ENCODE measurements at regions of chr4 and their contacts with region 1.

Region 1: GRCh38 chr4:63607169-63607872 is 801.9 kb downstream of the TECRL start:
- DNase-seq: no peak

Region 2: DNA sequence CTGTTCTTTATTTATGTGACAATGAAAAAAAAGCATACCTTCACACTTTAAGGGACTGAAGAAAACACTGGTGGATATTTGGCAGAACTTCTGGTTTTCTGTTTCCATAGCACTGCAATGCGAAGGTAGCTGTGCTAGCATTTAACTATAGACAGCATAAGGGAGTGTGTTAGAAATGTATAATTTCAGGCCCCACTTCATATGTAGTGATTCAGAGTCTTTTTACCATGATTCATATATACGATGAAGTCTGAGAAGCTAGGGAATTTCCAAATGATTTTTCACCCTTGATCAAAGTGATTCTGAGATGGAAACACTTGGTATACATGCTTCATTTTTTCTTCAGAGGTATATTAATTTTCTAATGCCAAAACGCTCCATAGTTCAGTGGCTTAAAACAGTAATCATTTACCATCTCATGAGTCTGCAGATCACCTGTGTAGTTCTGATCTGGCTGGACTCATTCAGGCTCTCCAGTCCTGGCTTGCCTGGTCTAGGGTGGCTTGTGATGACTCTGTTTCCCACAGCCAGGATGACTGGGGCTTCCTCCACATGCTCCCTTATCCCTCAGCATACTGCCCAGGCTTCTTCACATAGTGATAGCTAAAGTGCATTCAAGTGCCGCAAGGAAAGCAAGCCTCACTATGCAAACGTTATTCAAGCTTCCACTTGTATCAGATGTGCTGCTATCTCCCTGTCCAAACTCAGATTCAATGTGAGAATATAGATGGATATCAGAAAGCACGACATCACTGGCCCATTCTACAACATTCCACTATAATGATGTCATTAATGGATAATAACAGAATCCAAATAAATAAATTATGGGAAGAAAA is 11.8 kb after region 1 on chr4:
- intact Hi-C with region 1: loop called in 1 of 2 experiments (anchors 2 kb)
- DNase-seq: no peak